ENCODE measurements at regions of chr1 and their contacts with region 1.

Region 1: DNA sequence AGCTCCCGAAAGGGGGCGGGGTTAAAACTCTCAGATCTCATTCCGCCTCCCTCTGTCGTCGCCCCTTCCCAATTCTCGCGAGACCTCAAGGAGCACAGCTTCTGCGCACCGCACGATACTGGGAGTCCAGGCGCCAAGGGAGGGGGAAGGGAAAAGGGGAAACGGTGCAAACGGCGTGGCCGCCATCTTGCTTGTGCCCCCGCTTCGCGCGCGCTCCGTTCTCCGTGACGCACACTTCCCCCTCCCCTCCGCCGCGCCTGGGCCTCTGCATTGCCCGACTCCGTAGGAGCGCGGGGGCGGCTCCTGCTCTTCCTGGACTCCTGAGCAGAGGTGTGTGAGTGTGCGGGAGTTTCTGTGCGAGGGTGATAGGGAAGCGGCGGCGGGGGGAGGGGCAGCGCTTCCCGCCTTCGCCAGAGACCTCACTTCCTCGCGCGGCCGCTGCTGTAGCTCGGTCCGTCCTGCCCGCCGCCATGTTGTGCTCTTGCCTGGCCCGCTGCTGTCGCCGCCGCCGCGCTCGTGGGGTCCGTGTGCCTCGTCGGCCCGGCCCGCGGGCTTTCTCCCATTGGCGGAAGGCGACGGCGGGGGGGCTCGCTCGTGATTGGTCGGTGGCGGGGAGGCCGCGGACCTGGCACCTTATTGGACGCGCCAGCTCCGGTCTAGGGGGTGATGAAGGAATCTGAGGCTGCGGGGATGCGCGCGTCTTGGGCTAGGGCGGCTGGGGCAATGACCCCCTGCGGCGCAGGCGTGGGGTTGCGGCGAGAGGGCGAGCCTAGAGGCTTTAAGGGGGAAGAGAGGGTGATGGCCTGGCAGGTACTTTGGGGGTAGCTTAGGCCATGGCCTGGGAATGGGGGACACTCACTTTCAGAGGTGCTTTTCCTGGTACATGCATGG is at the start of gene NFYC:
- DNase-seq: peak; percentile 99
- H3K4me3 Mint-ChIP-seq: peak within 1 kb of the TSS; percentile 97
- H3K27ac Mint-ChIP-seq: peak within 1 kb of the TSS; percentile 96
- H3K4me1 Mint-ChIP-seq: peaks cover 51% of the 10 kb centered on the region
- H3K27me3 Mint-ChIP-seq: no peaks in the 10 kb centered on the region
- total RNA-seq, gene NFYC: 53.5 to 63.1 TPM

Region 2: GRCh38 chr1:40385437-40386358 is 306.1 kb before region 1 on chr1:
- CTCF ChIA-PET with region 1: no interaction called
- intact Hi-C with region 1: loop called (anchors 5 kb)
- DNase-seq: peak; percentile 85
- H3K4me3 Mint-ChIP-seq: peak overlapping the region; percentile 80
- H3K27ac Mint-ChIP-seq: peak overlapping the region; percentile 99
- H3K4me1 Mint-ChIP-seq: peaks cover 88% of the 10 kb centered on the region
- H3K27me3 Mint-ChIP-seq: no peaks in the 10 kb centered on the region

Region 3: DNA sequence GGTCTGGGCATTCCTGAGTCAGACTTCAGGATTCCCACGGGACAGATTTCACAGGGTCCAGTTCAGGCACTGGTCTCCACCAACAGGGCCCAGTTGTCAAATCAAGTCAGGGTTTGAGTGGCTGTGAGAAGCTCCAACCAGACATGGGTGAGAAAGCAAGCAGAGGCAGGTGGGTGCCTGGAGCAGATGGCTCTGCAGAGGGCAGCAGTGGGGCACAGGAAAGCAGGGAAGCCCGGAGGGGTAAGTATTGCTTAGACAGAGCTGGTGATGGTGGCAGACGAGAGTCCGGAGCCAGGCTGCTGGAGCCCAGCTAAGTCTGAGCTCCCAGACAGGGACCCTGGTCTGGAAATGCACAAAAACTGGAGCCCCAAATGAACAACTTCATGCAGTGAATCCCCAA is 66.7 kb before region 1 on chr1:
- CTCF ChIA-PET with region 1: no interaction called
- intact Hi-C with region 1: loop called (anchors 1 kb)
- DNase-seq: peak; percentile 58
- H3K4me3 Mint-ChIP-seq: no peak overlapping the region
- H3K27ac Mint-ChIP-seq: no peak overlapping the region
- H3K4me1 Mint-ChIP-seq: peaks cover 20% of the 10 kb centered on the region
- H3K27me3 Mint-ChIP-seq: no peaks in the 10 kb centered on the region

Region 4: DNA sequence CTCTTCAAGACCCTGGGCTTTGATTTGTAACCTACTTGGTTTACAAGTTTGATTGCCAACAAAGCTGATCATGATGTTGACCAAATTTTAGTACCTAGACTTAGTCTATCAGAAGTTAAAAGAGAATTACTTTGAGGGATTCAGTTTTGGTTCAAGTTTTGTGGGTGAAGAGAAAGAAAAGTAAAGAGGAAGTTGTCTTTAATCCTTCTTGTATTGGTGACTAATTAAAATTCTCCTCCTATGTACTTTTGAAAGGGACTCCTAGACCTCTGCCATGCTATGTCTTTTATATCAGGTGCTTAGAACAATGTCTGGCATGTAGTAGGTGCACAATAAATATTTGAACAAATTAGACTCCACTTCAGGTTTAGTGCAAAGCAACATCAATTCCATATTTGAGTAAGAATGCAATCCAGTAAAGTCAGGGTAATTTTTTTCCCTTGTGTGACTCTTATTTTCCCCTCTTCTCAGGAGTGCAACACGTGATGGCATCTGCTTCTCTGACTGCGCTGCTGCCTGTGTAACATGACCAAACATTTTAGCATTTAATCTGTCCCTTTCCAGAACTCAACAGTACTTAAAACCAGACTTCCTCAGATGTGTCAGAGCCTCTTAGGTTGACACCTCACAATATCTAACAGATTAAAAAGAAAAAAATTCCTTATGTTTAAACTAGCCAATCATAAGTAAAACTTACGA is 50.7 kb after region 1 on chr1:
- CTCF ChIA-PET with region 1: no interaction called
- intact Hi-C with region 1: loop called (anchors 1 kb)
- DNase-seq: peak; percentile 55
- H3K4me3 Mint-ChIP-seq: no peak overlapping the region
- H3K27ac Mint-ChIP-seq: peak overlapping the region; percentile 66
- H3K4me1 Mint-ChIP-seq: peaks cover 60% of the 10 kb centered on the region
- H3K27me3 Mint-ChIP-seq: no peaks in the 10 kb centered on the region

Region 5: DNA sequence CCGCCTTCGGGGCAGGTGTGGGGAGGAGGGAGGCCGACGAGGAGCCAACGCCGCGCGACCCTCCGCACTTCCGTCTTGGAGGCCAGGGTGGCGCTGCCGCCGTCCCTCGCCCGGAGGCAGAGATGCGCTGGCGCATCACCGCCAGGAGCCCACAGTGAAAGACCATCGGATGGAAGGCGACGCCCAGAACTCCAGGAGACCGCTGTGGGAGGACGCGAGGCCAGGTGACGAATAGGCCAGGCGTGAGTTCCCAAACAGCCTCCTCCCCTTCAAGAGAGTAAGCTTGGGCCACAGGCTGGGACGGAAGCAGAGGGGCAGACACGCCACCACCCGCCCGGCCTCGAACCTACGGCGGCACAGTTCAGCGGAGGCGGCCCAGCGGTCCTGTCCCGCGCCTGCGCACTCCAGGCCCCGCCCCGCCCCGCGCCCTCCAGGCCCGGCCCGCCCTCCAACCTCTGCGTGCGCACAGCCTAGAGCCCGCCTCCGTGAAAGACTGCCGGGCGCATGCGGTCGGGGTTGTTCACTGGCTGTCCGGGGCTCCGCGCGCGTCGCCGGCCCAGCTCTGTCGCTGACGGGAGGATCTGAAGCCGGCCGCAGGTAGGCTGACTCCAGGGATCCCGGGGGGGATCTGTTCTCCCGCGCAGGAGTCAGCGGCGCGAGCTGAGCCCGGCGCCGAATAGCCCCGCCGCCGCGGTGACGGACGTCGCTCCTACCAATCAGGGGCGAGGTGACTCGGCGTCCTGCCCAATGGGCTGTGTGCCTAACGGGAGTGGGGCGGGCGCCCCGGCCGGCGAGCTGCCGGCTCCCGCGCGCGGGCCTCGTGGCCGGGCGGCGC is 287.7 kb after region 1 on chr1 and contains the start of gene CTPS1:
- CTCF ChIA-PET with region 1: no interaction called
- intact Hi-C with region 1: loop called (anchors 2 kb)
- DNase-seq: peak; percentile 96
- H3K4me3 Mint-ChIP-seq: peak within 1 kb of the TSS; percentile 82
- H3K27ac Mint-ChIP-seq: peak within 1 kb of the TSS; percentile 84
- H3K4me1 Mint-ChIP-seq: peaks cover 40% of the 10 kb centered on the region
- H3K27me3 Mint-ChIP-seq: no peaks in the 10 kb centered on the region
- total RNA-seq, gene CTPS1: 74.9 to 75.1 TPM